Common myeloid progenitor, CD34-positive (primary cell): ENCODE measurements at regions of chr22 and their contacts with region 1.

Region 1: GRCh38 chr22:38181453-38182247 is at the start of gene PLA2G6:
- DNase-seq: peak; percentile 97 to 98 (median 98)
- H3K4me3 ChIP-seq: peak within 1 kb of the TSS; percentile 44 to 89 (median 76)
- H3K27ac ChIP-seq: peak within 1 kb of the TSS; percentile 97 to 99
- H3K4me1 ChIP-seq: peaks cover 10 to 44% (median 36%) of the 10 kb centered on the region in 4 experiments
- H3K27me3 ChIP-seq: no peaks in the 10 kb centered on the region

Region 2: DNA sequence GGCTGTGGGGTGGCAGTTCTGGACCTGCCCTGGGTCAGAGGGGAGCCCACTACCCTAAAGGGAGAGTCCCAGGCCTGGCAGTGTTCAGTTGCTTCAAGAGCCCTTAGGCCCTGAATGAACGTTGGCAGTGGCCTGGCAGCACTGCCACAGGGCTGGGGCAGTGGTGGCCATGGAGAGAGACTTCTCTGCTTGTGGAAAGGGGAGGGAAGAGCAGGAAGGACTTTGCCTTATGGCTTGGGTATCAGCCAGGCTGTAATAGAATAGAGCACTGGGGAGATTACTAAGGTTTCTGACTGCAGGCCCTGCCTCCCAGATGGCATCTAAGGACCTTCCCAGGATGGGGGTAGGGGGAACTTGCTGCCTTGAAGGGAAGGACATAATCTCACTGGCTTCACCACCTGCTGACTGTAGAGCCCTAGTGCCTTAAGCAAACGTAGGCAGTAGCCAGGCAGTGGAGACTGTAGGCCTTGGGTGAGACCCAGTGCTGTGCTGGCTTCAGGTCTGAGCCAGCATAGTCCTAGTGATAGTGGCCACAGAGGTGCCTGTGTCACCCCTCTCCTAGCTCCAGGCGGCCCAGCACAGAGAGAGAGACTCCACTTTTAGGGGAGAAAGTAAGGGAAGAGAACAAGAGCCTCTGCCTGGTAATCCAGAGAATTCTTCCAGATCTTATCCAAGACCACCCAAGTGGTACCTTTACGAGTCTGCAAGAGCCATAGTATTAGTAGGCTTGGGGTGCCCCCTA is 27.7 kb before region 1 on chr22:
- CTCF ChIA-PET with region 1: no interaction called
- POLR2A ChIA-PET with region 1: no interaction called
- DNase-seq: no peak
- H3K4me3 ChIP-seq: no peak overlapping the region
- H3K27ac ChIP-seq: no peak overlapping the region
- H3K4me1 ChIP-seq: peaks cover 0 to 5% (median 0%) of the 10 kb centered on the region in 4 experiments
- H3K27me3 ChIP-seq: no peaks in the 10 kb centered on the region

Region 3: DNA sequence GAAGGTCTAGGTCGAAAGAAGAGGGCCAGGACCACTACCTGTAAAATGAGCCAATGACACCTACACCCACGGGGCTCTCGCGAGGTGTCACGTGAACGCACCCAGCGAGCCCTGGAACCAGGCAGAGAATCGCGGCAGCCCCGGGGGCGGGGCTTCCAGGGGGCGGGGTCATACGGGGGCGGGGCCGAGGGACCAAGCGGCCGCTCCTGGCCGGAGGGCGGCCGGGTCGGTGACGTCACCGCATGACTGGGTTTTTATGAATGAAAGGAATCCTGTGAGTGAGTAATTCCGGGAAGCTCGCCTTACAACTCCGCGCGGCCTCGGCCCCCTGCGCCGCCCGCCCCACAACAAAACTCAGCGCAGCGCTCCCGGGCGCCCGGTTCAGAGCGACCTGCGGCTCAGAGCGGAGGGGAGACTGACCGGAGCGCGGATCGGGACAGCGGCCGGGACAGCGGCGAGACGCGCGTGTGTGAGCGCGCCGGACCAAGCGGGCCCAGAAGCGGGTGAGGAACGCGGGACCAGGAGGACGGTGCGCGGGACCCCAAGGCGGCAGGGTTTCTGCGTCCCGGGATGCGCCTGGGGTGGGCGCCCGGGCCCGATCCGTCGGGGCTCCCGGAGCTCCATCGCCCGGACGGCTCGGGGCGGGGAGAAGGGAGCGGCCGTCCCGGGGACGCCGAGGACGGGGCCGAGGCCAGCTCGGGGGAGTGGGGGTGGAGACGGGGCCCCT is 20.2 kb after region 1 on chr22 and contains the start of gene MAFF:
- CTCF ChIA-PET with region 1: interaction called, 10 read pairs
- POLR2A ChIA-PET with region 1: interaction called, 24 read pairs
- DNase-seq: peak; percentile 90 to 93 (median 93)
- H3K4me3 ChIP-seq: peak within 1 kb of the TSS; percentile 69 to 94 (median 82)
- H3K27ac ChIP-seq: peak within 1 kb of the TSS; percentile 50 to 68
- H3K4me1 ChIP-seq: peaks cover 2 to 37% (median 35%) of the 10 kb centered on the region in 4 experiments
- H3K27me3 ChIP-seq: no peaks in the 10 kb centered on the region

Region 4: GRCh38 chr22:38608992-38609750 is 427.5 kb after region 1 on chr22:
- CTCF ChIA-PET with region 1: no interaction called
- POLR2A ChIA-PET with region 1: no interaction called
- DNase-seq: no peak
- H3K4me3 ChIP-seq: no peak overlapping the region
- H3K27ac ChIP-seq: no peak overlapping the region
- H3K4me1 ChIP-seq: no peaks in the 10 kb centered on the region
- H3K27me3 ChIP-seq: no peaks in the 10 kb centered on the region